ENCODE measurements at regions of chr13 and their contacts with region 1.

Region 1: DNA sequence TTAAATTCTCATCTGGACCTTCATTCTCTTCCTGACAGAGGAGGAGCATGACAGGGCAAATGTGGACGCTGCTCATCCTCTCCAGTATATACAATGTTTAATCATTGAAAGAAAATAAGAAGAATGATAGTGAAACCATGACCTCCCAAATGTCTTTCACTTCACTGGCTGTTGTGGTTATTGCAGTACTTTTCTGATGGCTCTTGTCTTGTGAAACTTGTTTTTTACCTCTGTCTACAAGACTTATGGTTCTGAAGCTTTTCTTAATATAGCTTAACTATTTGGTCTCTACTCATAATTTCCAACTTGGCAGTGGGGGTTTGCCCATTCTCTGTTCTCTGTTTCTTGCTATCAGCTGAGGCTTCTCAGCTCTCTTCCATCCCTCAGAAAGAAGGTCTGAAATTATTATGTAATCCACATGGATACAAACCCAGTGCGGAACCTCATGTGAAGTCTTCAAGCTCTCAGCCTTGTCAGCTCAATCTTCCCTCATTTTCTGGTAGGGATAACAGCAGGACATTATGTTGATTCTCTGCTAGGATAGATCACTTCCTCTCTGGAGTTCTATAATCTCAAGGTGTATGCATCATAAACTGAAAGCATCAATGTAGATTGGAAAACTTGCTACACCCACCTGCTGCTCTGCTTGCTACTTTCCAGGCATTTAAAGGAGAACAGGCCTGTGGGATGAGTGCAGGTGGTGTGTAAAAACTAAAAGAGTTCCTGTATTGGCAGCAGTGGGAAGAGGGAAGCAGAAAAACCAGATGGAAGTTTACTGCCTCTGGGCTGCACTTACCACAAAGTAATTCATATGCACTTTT is 250.3 kb upstream of the HTR2A start:
- DNase-seq: no peak
- H3K4me3 ChIP-seq: no peak overlapping the region
- H3K27ac ChIP-seq: no peak overlapping the region
- H3K4me1 ChIP-seq: no peaks in the 10 kb centered on the region
- H3K27me3 ChIP-seq: peaks cover 3% of the 10 kb centered on the region
- CTCF ChIP-seq: no peak

Region 2: DNA sequence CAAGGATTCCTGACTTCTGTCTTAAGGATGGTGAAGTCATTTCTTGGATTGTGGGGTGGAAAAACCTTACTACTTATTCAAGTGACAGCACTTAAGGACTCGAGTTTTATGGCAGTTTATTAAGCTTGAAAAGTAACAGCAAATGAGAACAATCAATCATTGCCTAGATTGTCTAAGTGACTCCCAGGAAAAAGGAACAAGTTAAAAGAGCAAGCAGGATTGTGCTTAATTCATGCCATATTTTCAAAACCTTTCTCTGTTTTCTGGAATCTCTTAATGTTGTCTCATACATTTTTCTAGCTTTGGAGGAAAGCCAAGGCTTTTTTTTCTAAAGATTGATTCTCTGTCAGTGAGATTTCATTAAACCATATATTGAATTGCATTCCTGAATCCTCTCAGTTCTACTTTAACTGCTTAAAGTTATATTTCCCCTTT is 14.2 kb before region 1 on chr13:
- CTCF ChIA-PET with region 1: no interaction called
- dilution Hi-C with region 1: no loop called
- in situ Hi-C with region 1: no loop called
- intact Hi-C with region 1: no loop called
- DNase-seq: no peak
- H3K4me3 ChIP-seq: no peak overlapping the region
- H3K27ac ChIP-seq: no peak overlapping the region
- H3K4me1 ChIP-seq: no peaks in the 10 kb centered on the region
- H3K27me3 ChIP-seq: no peaks in the 10 kb centered on the region
- CTCF ChIP-seq: no peak

Region 3: GRCh38 chr13:47241446-47241845 is 94.2 kb after region 1 on chr13:
- CTCF ChIA-PET with region 1: no interaction called
- dilution Hi-C with region 1: loop called (anchors 5 kb)
- in situ Hi-C with region 1: no loop called
- intact Hi-C with region 1: no loop called
- DNase-seq: no peak
- H3K4me3 ChIP-seq: no peak overlapping the region
- H3K27ac ChIP-seq: no peak overlapping the region
- H3K4me1 ChIP-seq: no peaks in the 10 kb centered on the region
- H3K27me3 ChIP-seq: no peaks in the 10 kb centered on the region
- CTCF ChIP-seq: no peak

Measured in mammary epithelial cell (primary cell).